ENCODE measurements at regions of chr20 and their contacts with region 1.

Region 1: DNA sequence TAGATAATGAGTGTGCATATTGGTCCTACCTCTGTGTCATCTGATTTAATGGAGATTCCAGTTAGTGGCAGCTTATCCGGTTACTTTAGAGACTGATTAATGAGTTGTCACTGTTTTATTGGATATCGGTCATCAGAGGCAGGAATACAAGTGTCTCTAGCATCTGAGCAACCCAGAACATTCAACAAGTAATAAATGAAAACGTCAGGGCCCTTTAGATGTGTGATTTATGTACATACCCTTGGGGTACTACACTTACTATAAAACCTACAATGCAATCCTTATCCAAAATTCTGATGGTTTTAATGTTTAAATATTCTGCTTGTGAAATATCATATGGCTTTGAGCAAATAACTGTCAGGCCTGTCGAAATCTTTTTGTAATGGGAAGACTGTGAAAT is 1117.9 kb upstream of the FLRT3 start:
- DNase-seq: no peak
- ATAC-seq: no peak
- H3K4me3 ChIP-seq: no peak overlapping the region
- H3K27ac ChIP-seq: no peak overlapping the region
- H3K4me1 ChIP-seq: no peaks in the 10 kb centered on the region
- H3K27me3 ChIP-seq: no peaks in the 10 kb centered on the region
- CTCF ChIP-seq: no peak

Region 2: GRCh38 chr20:15440049-15440702 is 15.1 kb before region 1 on chr20:
- intact Hi-C with region 1: loop called in 1 of 10 experiments (anchors 2 kb)
- DNase-seq: no peak
- ATAC-seq: no peak
- H3K4me3 ChIP-seq: no peak overlapping the region
- H3K27ac ChIP-seq: no peak overlapping the region
- H3K4me1 ChIP-seq: peaks cover 0 to 7% (median 0%) of the 10 kb centered on the region in 9 donors
- H3K27me3 ChIP-seq: no peaks in the 10 kb centered on the region
- CTCF ChIP-seq: no peak

Region 3: DNA sequence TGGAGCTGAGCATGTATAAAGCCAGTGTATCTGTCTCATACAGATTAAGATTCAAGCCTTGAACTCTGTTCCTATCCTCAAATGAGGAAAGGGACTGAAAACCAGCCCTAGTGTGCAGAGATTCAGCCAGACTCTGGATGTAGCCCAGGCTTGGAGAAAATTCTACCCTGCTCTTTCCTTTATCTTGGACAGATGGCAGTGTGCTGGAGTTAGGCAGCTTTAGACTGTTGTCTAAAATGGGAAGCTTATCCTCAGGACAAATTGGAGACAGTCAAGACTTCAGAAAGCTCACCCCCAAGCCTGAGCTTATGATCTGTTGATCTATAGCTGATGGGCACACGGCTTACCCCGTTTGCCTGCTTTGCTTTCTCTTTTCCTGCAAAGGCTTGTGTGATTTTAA is 60.4 kb after region 1 on chr20:
- intact Hi-C with region 1: loop called in 1 of 10 experiments (anchors 10 kb)
- DNase-seq: no peak
- ATAC-seq: peak in 1 of 8 donors; percentile 17
- H3K4me3 ChIP-seq: no peak overlapping the region
- H3K27ac ChIP-seq: no peak overlapping the region
- H3K4me1 ChIP-seq: no peaks in the 10 kb centered on the region
- H3K27me3 ChIP-seq: no peaks in the 10 kb centered on the region
- CTCF ChIP-seq: peak in 1 of 9 donors; percentile 12